Thyroid gland (tissue), 4 donors: ENCODE measurements at regions of chr1 and their contacts with region 1.

Region 1: DNA sequence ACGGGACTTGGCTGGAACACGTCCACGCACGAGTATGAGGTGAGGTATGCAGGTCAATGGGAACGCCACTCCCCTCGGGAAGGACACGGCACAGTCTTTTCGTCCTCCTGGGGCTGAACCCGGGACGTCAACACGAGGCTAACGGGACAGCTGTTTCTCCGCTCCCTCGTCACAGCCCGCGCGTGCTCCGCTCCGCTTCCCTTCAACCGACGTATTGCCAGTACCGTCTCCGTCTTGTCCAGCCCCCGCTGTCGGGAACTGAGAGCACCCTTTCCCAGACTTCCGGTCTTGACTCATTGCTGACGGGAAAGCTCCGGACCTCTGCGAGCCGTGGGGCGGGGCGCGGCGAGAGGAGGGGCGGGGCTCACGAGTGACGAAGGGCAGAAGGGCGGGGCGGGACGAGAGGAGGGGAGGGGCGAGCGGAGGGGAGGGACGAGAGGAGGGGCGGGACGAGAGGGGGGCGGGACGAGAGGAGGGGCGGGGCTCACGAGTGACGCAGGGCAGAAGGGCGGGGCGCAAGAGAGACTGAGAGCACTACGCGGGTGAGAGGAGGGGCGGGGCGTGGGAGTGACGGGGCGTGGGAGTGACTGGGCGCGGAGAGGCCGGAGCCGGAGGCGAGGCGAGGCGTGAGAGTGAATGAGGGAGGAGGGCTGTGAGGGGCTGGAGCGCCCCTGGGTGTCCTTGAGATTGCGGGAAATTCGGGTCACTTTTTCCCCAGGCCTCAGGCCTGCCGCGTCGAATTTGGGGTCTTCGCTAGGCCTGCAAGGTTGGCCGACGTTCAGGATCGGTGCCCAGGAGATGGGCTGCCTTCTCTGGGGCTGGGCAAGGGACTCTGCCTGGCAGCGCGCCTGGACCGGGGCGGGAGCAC is 22.2 kb upstream of the CFAP126 start:
- DNase-seq: peak; percentile 95 to 96
- H3K4me3 ChIP-seq: peak overlapping the region; percentile 46 to 53 (median 48)
- H3K27ac ChIP-seq: peak overlapping the region; percentile 57 to 93 (median 93)
- H3K4me1 ChIP-seq: peaks cover 4 to 6% of the 10 kb centered on the region in 2 donors
- H3K27me3 ChIP-seq: no peaks in the 10 kb centered on the region
- CTCF ChIP-seq: no peak
- POLR2A ChIP-seq: peak in 1 of 2 donors; percentile 93

Region 2: GRCh38 chr1:161192476-161193465 is 197.2 kb before region 1 on chr1:
- intact Hi-C with region 1: loop called (anchors 10 kb)
- DNase-seq: peak; percentile 52 to 55
- H3K4me3 ChIP-seq: no peak overlapping the region
- H3K27ac ChIP-seq: no peak overlapping the region
- H3K4me1 ChIP-seq: peaks cover 0 to 7% of the 10 kb centered on the region in 2 donors
- H3K27me3 ChIP-seq: no peaks in the 10 kb centered on the region
- CTCF ChIP-seq: peak; percentile 40 to 90 (median 66)
- POLR2A ChIP-seq: no peak

Region 3: DNA sequence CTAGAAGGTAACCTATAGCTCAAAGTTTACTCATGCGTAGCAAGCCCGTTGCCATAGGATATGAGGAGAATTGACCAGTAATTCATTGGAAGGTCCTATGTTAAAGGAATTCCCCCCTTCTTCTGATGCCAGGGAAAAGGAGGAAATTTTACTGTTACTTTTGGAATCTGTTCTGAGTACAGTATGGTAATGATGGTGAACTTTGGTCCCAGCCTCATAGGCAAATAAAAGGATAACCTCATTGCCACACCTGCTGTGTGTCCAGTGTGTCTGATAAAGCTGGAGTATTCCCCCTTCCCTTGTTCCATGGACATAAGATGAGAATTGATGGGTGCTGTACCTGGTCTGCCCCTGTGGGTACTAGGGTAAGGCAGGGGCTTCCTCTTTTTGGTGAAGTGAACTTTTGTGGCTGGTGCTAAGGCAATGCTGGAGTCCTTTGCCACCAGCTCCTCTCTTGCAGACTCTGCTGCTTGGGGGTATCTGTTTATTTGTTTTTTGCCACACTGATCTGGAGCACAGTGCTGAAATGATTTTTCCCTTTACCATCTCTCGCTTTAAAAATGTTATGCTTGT is 102.4 kb before region 1 on chr1:
- intact Hi-C with region 1: no loop called
- DNase-seq: no peak
- H3K4me3 ChIP-seq: no peak overlapping the region
- H3K27ac ChIP-seq: no peak overlapping the region
- H3K4me1 ChIP-seq: no peaks in the 10 kb centered on the region
- H3K27me3 ChIP-seq: no peaks in the 10 kb centered on the region
- CTCF ChIP-seq: no peak
- POLR2A ChIP-seq: no peak

Region 4: GRCh38 chr1:161314201-161314981 is 75.5 kb before region 1 on chr1 and contains the start of gene SDHC:
- intact Hi-C with region 1: loop called (anchors 10 kb)
- DNase-seq: peak; percentile 90 to 92
- H3K4me3 ChIP-seq: peak within 1 kb of the TSS; percentile 71 to 98 (median 90)
- H3K27ac ChIP-seq: peak within 1 kb of the TSS; percentile 83 to 94 (median 92)
- H3K4me1 ChIP-seq: peaks cover 7 to 17% of the 10 kb centered on the region in 2 donors
- H3K27me3 ChIP-seq: no peaks in the 10 kb centered on the region
- CTCF ChIP-seq: peak in 1 of 6 experiments; percentile 10
- POLR2A ChIP-seq: peak in 1 of 2 donors; percentile 89
- total RNA-seq, gene SDHC: 49.1 to 174 (median 111) TPM